ENCODE measurements at regions of chr12 and their contacts with region 1.

Region 1: DNA sequence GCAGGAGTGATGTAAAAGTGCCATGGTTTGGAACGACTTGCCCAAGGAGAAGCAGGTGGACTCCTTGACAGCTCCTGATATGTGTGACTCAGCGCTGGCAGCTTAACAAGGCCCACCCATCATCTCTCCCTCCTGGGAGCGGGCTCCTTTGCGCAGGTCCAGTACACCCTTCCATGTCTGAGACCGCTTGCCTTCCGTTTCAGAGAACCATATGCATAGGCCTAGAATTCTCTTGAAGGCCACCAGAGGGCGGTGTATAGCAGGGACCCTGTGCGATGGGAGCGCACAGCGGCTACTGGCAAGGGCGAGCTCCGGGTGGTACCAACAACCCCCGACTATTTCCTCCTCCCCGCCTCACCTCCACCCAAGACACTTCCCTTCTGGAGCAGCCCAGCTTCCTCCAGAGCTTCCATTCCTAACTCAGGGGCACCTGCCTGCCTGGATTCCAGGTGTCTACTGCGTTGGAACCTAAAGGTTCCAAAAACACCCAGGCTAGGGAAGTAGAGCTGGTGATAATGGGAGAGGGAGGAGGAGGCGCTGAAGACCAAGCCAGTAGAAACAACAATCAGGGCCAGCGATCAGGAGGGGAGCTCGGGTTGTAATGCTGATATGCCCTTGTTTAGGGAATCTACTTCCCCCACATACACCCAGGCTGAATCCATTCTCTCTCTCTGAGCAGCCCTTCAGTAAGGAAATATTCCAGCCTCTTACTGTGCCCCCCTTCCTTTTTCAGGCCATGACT is 6.2 kb downstream of the DHH start:
- DNase-seq: peak; percentile 76
- H3K4me3 Mint-ChIP-seq: no peak overlapping the region
- H3K27ac Mint-ChIP-seq: no peak overlapping the region
- H3K4me1 Mint-ChIP-seq: peaks cover 62% of the 10 kb centered on the region
- H3K27me3 Mint-ChIP-seq: peaks cover 77% of the 10 kb centered on the region

Region 2: GRCh38 chr12:48995061-48995879 is 93.1 kb before region 1 on chr12:
- CTCF ChIA-PET with region 1: interaction called, 18 read pairs
- DNase-seq: peak; percentile 67
- H3K4me3 Mint-ChIP-seq: peak overlapping the region; percentile 13
- H3K27ac Mint-ChIP-seq: no peak overlapping the region
- H3K4me1 Mint-ChIP-seq: peaks cover 32% of the 10 kb centered on the region
- H3K27me3 Mint-ChIP-seq: peaks cover 95% of the 10 kb centered on the region

Region 3: DNA sequence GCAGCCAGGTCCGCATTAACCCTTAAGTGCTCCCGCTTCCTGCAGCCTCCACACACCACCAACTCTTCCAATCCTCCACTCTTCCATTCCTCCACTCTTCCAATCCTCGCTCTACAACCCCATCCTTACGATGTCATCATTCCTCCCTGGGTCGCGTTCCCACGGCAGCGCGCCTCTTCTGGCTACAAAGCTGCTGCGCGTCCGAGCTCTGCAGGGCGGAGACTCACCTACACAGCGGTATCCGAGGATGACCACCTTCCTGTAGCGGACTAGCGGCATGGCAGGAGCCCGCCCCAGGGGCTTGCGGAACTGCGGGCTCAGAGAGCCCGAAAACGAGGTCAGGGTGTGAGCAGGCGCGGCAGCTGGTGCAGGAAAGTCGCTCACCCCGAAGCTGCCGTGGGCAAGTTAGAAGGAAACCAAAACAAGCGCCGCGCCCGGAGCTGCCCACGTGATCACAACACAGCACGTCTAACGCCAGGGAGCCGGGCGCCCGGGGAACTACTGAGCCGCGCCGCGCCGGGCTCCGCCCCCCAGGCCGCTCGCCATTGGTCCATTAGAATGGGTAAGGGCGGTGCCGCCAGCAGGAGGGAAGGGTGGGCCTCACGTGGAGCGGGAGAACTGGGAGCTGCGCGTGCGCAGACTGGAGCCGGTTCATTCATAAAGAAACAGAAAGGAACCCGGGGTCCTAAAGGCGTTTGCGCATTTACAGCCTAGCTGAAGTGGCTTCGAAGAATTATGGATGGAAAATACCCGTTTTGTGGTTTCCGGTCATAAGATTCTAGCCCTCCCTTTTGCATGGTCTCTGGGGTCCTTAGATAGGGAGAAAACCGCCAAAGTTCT is 18.6 kb before region 1 on chr12 and contains the start of gene RHEBL1:
- CTCF ChIA-PET with region 1: interaction called, 174 read pairs
- DNase-seq: peak; percentile 99
- H3K4me3 Mint-ChIP-seq: peak within 1 kb of the TSS; percentile 89
- H3K27ac Mint-ChIP-seq: peak within 1 kb of the TSS; percentile 90
- H3K4me1 Mint-ChIP-seq: peaks cover 24% of the 10 kb centered on the region
- H3K27me3 Mint-ChIP-seq: no peaks in the 10 kb centered on the region

Region 4: GRCh38 chr12:49105608-49106007 is 17.2 kb after region 1 on chr12:
- CTCF ChIA-PET with region 1: interaction called, 97 read pairs
- DNase-seq: no peak
- H3K4me3 Mint-ChIP-seq: no peak overlapping the region
- H3K27ac Mint-ChIP-seq: no peak overlapping the region
- H3K4me1 Mint-ChIP-seq: peaks cover 19% of the 10 kb centered on the region
- H3K27me3 Mint-ChIP-seq: no peaks in the 10 kb centered on the region

Region 5: GRCh38 chr12:49110464-49111155 is 22.2 kb after region 1 on chr12 and contains the start of gene LMBR1L:
- CTCF ChIA-PET with region 1: interaction called, 22 read pairs
- DNase-seq: peak; percentile 99
- H3K4me3 Mint-ChIP-seq: peak within 1 kb of the TSS; percentile 94
- H3K27ac Mint-ChIP-seq: peak within 1 kb of the TSS; percentile 94
- H3K4me1 Mint-ChIP-seq: peaks cover 28% of the 10 kb centered on the region
- H3K27me3 Mint-ChIP-seq: peaks cover 15% of the 10 kb centered on the region

Region 6: GRCh38 chr12:49130151-49131050 is 42.0 kb after region 1 on chr12:
- CTCF ChIA-PET with region 1: interaction called, 10 read pairs
- DNase-seq: peak; percentile 93
- H3K4me3 Mint-ChIP-seq: peak overlapping the region; percentile 96
- H3K27ac Mint-ChIP-seq: peak overlapping the region; percentile 99
- H3K4me1 Mint-ChIP-seq: peaks cover 56% of the 10 kb centered on the region
- H3K27me3 Mint-ChIP-seq: peaks cover 12% of the 10 kb centered on the region

Region 7: DNA sequence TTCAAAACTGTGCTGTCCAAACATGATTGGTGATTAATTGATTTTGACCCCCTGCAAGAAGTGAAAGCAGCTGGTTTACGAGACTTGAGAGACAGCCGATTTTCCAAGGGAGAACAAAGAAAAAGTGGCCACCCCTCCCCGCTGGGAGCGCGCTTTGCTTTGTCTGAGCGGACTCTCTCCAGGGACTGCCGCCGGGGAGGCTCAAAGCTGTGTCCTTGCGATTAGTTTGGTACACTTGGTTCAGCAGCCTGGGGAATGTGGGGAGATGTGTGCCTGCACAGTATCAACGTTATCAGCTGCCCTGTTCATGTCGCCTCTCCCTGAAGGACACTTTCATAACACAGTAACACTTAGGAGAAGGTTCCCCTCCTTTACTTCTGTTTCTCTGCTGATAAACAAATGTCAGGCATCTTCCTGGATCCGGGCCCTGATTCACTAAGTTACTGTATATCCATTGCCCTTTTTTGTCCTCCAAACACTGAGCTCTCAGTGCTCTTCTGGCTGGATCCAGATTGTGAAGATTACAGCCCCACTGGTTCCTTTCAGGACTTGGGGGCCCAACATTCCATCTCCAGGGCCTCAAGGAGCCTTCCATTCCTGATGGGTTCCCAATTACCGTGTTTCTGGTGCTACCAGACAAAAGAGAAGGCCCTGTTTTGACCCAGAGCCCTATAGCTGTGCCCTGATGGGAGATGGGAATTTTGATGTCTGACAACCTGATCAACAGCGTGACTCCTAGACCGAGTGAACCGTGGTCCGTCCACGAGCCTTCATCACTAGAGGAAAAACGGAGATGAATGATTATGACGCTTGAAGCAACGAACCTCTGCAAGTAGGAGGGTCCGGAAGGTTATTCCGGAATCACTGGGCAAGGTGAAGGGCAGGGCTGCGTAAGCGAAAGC is 144.8 kb after region 1 on chr12:
- CTCF ChIA-PET with region 1: interaction called, 31 read pairs
- DNase-seq: no peak
- H3K4me3 Mint-ChIP-seq: peak overlapping the region; percentile 53
- H3K27ac Mint-ChIP-seq: peak overlapping the region; percentile 92
- H3K4me1 Mint-ChIP-seq: peaks cover 21% of the 10 kb centered on the region
- H3K27me3 Mint-ChIP-seq: peaks cover 29% of the 10 kb centered on the region

Measured in activated naive CD4-positive, alpha-beta T cell treated with anti-CD3 and anti-CD28 coated beads, Interleukin-2, amount 10 ng/mL, durations not matched to agents 7 days and 5 days (primary cell).